OCI-LY7 (cell line): ENCODE measurements at regions of chr6 and their contacts with region 1.

Region 1: DNA sequence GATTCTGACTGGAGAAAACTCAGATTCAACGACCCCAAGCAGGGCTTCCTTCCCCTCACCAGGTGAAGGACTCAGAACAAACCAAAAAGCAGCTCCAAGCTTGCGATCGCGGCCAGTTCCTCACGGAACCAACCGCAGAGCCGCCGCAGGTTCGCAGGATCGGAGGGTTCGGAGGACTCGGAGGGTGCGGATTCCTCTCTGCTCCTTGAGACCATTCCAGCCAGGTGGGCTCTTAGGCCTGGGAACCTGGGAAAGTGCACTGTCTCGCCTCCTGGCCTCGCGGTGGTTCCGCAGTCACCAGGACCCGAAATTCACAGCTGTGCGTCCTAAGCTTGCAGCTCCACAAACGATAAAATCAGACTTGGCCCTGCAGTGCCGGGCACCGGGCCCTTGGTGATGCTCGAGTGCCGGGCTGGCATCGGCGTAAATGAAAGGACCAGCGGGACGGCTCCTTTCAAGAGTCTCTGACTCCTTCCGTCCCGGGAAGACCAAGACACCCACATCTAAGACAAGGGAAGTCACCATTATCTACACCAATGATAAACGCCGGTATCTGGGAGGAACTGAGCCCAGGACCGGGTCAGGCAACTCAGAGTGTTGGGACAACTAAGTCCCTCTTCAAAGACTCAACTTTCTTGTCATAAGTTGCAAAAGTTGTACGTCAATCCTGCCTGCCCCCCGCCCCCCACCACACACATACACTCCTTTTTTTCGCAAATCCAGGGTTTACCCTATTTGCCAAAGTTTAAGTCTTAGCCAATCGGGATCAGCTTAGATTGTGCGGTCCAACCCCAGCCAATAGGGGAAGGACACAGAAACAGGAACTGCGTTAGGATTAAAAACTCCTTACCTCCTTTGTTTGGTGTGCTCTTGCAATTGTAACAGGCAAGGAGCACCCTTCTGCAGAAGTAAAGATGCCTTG is 69.8 kb upstream of the PRSS16 start:
- DNase-seq: peak; percentile 89
- H3K4me3 ChIP-seq: peak overlapping the region; percentile 95
- H3K27ac ChIP-seq: peak overlapping the region; percentile 81
- H3K4me1 ChIP-seq: peaks cover 8% of the 10 kb centered on the region
- CTCF ChIP-seq: peak; percentile 74

Region 2: DNA sequence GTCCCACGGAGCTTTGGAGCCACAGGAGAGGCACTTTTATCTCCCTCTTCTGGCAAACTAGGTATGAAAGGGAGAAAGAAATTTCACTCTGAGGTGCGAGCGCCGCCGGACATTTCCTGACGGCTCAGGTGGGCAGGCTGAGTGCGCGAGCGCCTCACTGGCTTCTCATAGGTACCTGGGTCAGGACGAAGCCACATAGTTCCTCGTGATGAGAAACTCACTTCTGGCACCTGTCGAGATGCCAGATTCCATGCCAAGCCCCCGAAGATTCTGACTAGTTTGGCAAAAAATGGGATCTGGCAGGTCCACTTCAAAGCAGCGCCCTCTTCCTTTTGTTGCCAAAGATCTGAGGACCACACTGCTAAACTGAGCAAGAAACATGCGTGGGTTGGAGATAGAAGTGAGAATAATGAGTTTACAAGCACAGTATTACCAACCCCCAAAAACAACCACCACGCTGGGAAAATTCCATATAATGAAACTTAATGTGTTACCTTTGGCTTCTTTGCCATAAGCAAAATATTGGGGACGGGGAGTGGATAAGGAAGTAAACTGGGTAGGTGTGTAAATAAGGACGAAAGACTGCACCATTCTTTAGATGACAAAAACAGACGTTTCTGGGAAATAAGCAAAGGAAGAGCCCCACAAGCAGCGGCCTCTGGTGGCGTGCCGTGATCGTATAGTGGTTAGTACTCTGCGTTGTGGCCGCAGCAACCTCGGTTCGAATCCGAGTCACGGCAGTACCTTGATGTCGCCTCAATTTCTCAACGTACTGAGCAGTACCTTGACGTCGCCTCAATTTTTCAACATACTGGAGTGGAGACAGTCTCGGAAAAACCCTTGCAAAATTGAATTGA is 20.1 kb before region 1 on chr6:
- CTCF ChIA-PET with region 1: no interaction called
- POLR2A ChIA-PET with region 1: interaction called, 15 read pairs
- intact Hi-C with region 1: loop called (anchors 2 kb)
- DNase-seq: peak; percentile 61
- H3K4me3 ChIP-seq: peak overlapping the region; percentile 56
- H3K27ac ChIP-seq: peak overlapping the region; percentile 28
- H3K4me1 ChIP-seq: peaks cover 45% of the 10 kb centered on the region
- CTCF ChIP-seq: peak; percentile 55

Region 3: GRCh38 chr6:27251606-27252251 is 74.0 kb after region 1 on chr6:
- CTCF ChIA-PET with region 1: no interaction called
- POLR2A ChIA-PET with region 1: interaction called, 6 read pairs
- intact Hi-C with region 1: loop called (anchors 2 kb)
- DNase-seq: peak; percentile 91
- H3K4me3 ChIP-seq: peak overlapping the region; percentile 80
- H3K27ac ChIP-seq: peak overlapping the region; percentile 22
- H3K4me1 ChIP-seq: peaks cover 15% of the 10 kb centered on the region
- CTCF ChIP-seq: peak; percentile 78

Region 4: DNA sequence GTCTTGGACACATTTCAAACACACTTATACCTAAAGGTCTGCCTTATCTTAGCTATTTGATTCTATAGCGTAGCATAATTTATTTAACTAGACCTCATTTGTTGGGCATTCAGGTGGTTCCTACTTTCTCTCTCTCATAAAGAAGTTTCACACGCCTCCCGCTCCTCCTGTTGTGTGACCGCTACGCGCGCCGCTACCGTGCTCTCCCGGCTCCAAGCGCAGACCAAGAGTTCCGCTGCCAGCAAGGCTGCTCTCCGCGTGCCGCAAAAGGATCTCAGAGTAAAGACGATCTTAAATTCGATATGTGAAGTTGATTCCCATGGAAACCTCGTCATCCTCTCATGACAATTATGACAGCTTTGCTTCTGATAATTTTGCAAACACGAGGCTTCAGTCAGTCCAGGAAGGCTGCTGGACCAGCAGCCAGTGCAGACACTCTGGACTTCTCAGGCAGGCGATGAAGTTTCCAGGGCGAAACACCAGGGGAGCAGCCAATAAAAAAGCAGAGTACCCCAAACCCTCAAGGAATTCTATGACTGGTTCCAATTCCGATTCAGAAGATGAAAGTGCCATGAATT is 90.2 kb after region 1 on chr6:
- CTCF ChIA-PET with region 1: no interaction called
- POLR2A ChIA-PET with region 1: no interaction called
- intact Hi-C with region 1: no loop called
- DNase-seq: no peak
- H3K4me3 ChIP-seq: no peak overlapping the region
- H3K27ac ChIP-seq: no peak overlapping the region
- H3K4me1 ChIP-seq: no peaks in the 10 kb centered on the region
- CTCF ChIP-seq: no peak

Region 5: DNA sequence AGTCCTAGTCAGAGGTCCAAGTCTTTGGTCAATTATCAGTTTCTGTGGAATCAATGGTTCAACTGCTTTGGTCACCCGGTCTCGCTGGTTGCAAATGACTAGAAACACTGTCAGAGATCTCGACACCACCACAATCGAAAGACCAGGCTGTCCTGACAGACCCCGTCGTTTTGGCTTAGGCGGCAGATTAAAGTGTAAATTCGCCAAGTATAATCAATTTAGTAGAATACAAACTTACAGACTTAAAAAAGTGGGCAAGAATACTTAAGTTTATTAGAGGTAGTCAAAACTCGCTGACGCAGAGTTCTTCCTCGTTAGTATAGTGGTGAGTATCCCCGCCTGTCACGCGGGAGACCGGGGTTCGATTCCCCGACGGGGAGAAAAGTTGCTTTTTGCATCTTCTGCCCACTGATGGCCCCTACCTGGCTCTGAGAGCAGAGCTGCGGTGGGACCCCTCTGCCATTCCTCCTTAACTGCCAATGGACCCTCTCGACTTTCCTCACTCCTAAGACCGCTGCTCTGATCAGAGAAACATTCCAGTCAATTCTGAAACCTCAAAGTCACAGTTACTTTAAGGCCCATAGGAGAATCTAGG is 325.8 kb after region 1 on chr6:
- CTCF ChIA-PET with region 1: no interaction called
- POLR2A ChIA-PET with region 1: interaction called, 3 read pairs
- intact Hi-C with region 1: loop called (anchors 5 kb)
- DNase-seq: peak; percentile 74
- H3K4me3 ChIP-seq: peak overlapping the region; percentile 74
- H3K27ac ChIP-seq: peak overlapping the region; percentile 22
- H3K4me1 ChIP-seq: peaks cover 12% of the 10 kb centered on the region
- CTCF ChIP-seq: no peak

Region 6: GRCh38 chr6:27795697-27796494 is 618.1 kb after region 1 on chr6:
- CTCF ChIA-PET with region 1: no interaction called
- POLR2A ChIA-PET with region 1: no interaction called
- intact Hi-C with region 1: loop called (anchors 5 kb)
- DNase-seq: peak; percentile 88
- H3K4me3 ChIP-seq: peak overlapping the region; percentile 33
- H3K27ac ChIP-seq: peak overlapping the region; percentile 32
- H3K4me1 ChIP-seq: peaks cover 33% of the 10 kb centered on the region
- CTCF ChIP-seq: peak; percentile 88